CD4-positive, alpha-beta T cell (primary cell): ENCODE measurements at regions of chr11 and their contacts with region 1.

Region 1: DNA sequence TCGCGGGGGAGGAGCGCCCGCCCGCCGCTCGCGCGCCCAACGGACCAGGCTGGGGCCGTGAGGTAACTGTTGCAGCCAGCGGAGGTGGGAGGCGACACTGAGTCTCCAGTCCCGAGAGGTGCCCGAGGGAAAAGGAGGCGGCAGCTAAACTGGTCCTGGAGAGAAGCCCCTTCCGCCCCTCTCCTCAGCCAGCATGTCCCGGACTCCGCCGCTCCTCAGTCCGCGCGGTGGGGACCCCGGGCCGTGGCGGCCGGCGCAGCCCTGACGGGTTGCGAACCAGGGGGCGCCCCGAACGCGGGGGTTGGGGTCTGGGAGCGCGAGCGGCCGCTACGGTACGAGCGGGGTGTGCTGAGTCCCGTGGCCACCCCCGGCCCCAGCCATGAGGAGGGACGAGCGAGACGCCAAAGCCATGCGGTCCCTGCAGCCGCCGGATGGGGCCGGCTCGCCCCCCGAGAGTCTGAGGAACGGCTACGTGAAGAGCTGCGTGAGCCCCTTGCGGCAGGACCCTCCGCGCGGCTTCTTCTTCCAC is at the start of gene PDE3B:
- DNase-seq: peak; percentile 39 to 89 (median 70)
- ATAC-seq: peak; percentile 59
- H3K4me3 ChIP-seq: peak within 1 kb of the TSS; percentile 91
- H3K4me3 Mint-ChIP-seq: peak within 1 kb of the TSS; percentile 96
- H3K27ac ChIP-seq: peak within 1 kb of the TSS; percentile 35 to 80
- H3K27ac Mint-ChIP-seq: peak within 1 kb of the TSS; percentile 90
- H3K4me1 ChIP-seq: peaks cover 15% of the 10 kb centered on the region
- H3K4me1 Mint-ChIP-seq: peaks cover 58% of the 10 kb centered on the region
- H3K27me3 ChIP-seq: no peaks in the 10 kb centered on the region
- H3K27me3 Mint-ChIP-seq: no peaks in the 10 kb centered on the region
- CTCF ChIP-seq: no peak
- total RNA-seq, gene PDE3B: 103 to 106 TPM

Region 2: DNA sequence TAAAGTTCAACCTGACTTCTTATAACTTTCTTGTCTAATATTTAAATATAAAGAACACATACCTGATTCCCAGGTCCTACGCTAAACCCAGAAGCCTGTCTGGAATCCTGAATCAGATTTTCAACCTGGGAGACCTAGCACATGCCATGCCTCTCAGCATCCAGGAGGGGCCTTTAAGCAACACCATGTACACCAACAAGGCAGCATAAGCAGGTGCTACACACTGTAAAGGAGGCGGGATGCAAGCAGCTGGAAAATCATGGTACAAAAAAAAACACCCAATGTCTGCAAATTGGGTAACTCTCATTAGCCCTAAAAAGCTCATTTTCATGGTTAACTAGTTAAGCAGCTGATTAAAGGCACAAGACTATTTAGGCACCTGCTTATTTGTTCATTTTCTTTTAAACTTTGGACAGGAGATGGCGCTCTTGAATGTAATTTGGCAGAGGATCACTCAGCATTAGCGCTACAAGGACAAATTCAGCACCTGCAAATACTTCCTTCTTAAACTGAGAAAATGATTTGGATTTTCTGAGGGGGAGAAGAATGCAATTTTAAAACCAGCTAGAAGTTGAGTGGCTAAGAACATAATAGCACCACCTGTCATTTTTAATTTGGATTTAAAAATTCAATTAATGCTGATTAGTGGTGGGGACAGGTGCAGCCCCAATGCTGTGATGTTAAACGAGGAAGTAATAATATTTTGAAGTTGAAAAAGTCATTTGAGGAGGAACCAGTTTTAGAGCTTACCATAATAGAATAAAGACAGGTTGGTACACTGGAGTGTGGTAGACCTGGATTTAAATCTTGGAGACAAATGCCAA is 871.3 kb before region 1 on chr11:
- CTCF ChIA-PET with region 1: no interaction called
- POLR2A ChIA-PET with region 1: no interaction called
- intact Hi-C with region 1: no loop called
- DNase-seq: peak in 6 of 14 experiments; percentile 4 to 86 (median 66)
- ATAC-seq: peak; percentile 70
- H3K4me3 ChIP-seq: no peak overlapping the region
- H3K4me3 Mint-ChIP-seq: no peak overlapping the region
- H3K27ac ChIP-seq: no peak overlapping the region
- H3K27ac Mint-ChIP-seq: no peak overlapping the region
- H3K4me1 ChIP-seq: no peaks in the 10 kb centered on the region
- H3K4me1 Mint-ChIP-seq: no peaks in the 10 kb centered on the region
- H3K27me3 ChIP-seq: no peaks in the 10 kb centered on the region
- H3K27me3 Mint-ChIP-seq: no peaks in the 10 kb centered on the region
- CTCF ChIP-seq: peak; percentile 77

Region 3: DNA sequence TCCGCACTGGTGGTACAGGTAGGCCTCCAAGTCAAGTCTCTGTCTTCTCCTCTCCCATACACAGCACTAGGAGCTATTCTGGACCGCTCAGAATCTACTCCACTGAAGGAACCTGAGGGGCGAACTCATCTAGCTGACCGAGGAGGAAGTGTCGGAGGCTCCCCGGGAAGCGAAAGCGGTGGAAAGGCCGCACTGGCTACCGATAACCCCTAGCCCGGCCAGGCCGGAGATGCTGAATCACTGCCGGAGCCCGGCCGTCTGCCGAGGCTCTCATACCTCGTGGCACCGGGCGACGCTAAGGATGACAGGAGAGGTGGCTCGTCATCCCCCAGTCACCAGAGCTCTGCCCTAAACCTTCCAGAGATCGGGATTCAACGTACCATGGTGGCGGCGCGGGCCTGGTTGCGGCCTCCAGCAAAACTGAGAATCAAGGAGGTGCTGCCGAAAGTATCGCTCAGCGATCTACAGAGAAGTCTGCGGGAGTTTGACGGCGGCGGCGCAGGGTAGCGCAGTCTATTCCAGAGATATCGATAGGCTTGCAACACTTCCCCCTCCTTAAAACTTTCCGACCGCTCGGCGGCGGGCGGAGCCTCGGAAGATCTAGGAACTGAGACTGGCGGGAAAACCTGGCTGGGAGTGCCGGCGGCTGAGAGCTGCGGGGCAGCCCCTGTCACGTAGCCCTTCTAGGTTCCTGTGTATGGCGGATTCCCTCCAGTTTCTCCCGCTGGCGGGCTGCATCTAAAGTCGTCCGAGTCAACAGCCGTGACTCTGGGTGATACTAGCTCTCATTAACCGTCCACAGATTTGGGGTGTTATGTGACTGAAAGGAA is 123.6 kb before region 1 on chr11 and contains the start of gene PSMA1:
- CTCF ChIA-PET with region 1: interaction called, 11 read pairs
- POLR2A ChIA-PET with region 1: interaction called, 25 read pairs
- intact Hi-C with region 1: loop called (anchors 5 kb)
- DNase-seq: peak; percentile 79 to 95 (median 87)
- ATAC-seq: peak; percentile 90
- H3K4me3 ChIP-seq: peak within 1 kb of the TSS; percentile 74
- H3K4me3 Mint-ChIP-seq: peak within 1 kb of the TSS; percentile 96
- H3K27ac ChIP-seq: peak within 1 kb of the TSS; percentile 81 to 83
- H3K27ac Mint-ChIP-seq: peak within 1 kb of the TSS; percentile 94
- H3K4me1 ChIP-seq: peaks cover 14% of the 10 kb centered on the region
- H3K4me1 Mint-ChIP-seq: peaks cover 37% of the 10 kb centered on the region
- H3K27me3 ChIP-seq: no peaks in the 10 kb centered on the region
- H3K27me3 Mint-ChIP-seq: no peaks in the 10 kb centered on the region
- CTCF ChIP-seq: peak; percentile 36
- total RNA-seq, gene PSMA1: 170 to 175 TPM

Region 4: GRCh38 chr11:14554959-14555358 is 88.8 kb before region 1 on chr11:
- CTCF ChIA-PET with region 1: interaction called, 5 read pairs
- POLR2A ChIA-PET with region 1: interaction called, 30 read pairs
- intact Hi-C with region 1: loop called (anchors 1 to 5 kb)
- DNase-seq: peak in 8 of 14 experiments; percentile 7 to 89 (median 46)
- ATAC-seq: peak; percentile 90
- H3K4me3 ChIP-seq: no peak overlapping the region
- H3K4me3 Mint-ChIP-seq: peak overlapping the region; percentile 56
- H3K27ac ChIP-seq: peak overlapping the region; percentile 35 to 51
- H3K27ac Mint-ChIP-seq: peak overlapping the region; percentile 92
- H3K4me1 ChIP-seq: peaks cover 3% of the 10 kb centered on the region
- H3K4me1 Mint-ChIP-seq: peaks cover 47% of the 10 kb centered on the region
- H3K27me3 ChIP-seq: no peaks in the 10 kb centered on the region
- H3K27me3 Mint-ChIP-seq: no peaks in the 10 kb centered on the region
- CTCF ChIP-seq: no peak

Region 5: DNA sequence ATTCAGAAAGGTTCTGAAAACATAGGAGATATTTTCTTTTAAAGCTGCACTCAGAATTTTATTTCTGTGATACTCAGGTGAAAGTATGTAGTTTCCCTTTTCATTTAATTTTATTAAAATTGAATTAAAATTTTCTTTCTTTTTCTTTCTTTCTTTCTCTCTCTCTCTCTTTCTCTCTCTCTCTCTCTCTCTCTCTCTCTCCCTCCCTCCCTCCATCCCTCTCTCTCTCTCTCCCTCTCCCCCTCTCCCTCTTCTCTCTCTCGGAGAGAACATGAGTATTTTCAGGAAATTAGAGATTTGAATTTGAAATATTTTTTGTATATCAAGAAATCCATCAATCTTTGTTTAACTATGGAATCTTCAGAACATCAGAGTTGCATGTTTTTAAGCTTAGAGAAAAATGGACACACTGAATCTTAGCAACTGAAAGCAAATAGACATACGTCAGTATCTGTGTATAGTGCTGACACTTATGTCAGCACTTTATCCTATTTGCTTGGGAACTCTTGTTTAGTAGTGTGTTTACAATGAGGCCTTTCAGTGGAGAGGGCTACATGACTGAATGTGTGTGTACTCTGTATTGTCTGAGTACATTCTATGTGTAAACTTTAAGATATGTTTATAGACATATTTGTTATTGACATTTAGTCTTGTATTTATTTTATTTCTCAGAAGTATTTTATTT is 44.3 kb after region 1 on chr11:
- CTCF ChIA-PET with region 1: no interaction called
- POLR2A ChIA-PET with region 1: no interaction called
- intact Hi-C with region 1: loop called in 1 of 2 experiments (anchors 5 kb)
- DNase-seq: peak in 1 of 14 experiments; percentile 18
- ATAC-seq: no peak
- H3K4me3 ChIP-seq: no peak overlapping the region
- H3K4me3 Mint-ChIP-seq: peak overlapping the region; percentile 5
- H3K27ac ChIP-seq: no peak overlapping the region
- H3K27ac Mint-ChIP-seq: peak overlapping the region; percentile 19
- H3K4me1 ChIP-seq: peaks cover 6% of the 10 kb centered on the region
- H3K4me1 Mint-ChIP-seq: peaks cover 44% of the 10 kb centered on the region
- H3K27me3 ChIP-seq: no peaks in the 10 kb centered on the region
- H3K27me3 Mint-ChIP-seq: no peaks in the 10 kb centered on the region
- CTCF ChIP-seq: no peak